A673 (cell line): ENCODE measurements at regions of chr17 and their contacts with region 1.

Region 1: GRCh38 chr17:5011928-5012327 is 14.2 kb downstream of the KIF1C start:
- DNase-seq: no peak
- H3K4me3 ChIP-seq: no peak overlapping the region
- H3K27ac ChIP-seq: no peak overlapping the region
- H3K4me1 ChIP-seq: no peaks in the 10 kb centered on the region
- H3K27me3 ChIP-seq: no peaks in the 10 kb centered on the region
- CTCF ChIP-seq: no peak

Region 2: DNA sequence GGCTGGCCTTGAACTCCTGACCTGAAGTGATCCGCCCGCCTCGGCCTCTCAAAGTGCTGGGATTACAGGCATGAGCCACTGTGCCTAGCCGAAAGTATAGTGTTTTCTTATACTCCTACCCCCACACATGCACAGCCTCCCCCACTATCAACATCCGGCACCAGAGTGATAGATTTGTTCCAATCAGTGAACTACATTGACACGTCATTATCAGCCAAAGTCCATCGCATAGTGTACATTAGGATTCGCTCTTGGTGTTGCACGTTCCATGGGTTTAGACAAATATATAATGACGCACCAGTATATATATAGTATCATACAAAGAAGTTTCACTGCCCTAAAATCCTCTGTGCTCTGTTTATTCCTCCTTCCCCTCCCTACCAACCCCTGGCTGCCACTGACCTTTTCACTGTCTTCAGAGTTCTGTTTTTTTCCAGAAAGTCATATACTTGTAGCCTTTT is 252.1 kb before region 1 on chr17:
- CTCF ChIA-PET with region 1: interaction called, 10 read pairs
- POLR2A ChIA-PET with region 1: no interaction called
- intact Hi-C with region 1: no loop called
- DNase-seq: no peak
- H3K4me3 ChIP-seq: no peak overlapping the region
- H3K27ac ChIP-seq: no peak overlapping the region
- H3K4me1 ChIP-seq: no peaks in the 10 kb centered on the region
- H3K27me3 ChIP-seq: peaks cover 4% of the 10 kb centered on the region
- CTCF ChIP-seq: no peak